ENCODE measurements at regions of chr1 and their contacts with region 1.

Region 1: GRCh38 chr1:200907611-200908097 is 13.0 kb downstream of the INAVA start:
- DNase-seq: no peak
- ATAC-seq: no peak
- H3K4me3 Mint-ChIP-seq: no peak overlapping the region
- H3K27ac Mint-ChIP-seq: no peak overlapping the region
- H3K4me1 Mint-ChIP-seq: peaks cover 11% of the 10 kb centered on the region
- H3K27me3 Mint-ChIP-seq: peaks cover 8% of the 10 kb centered on the region
- CTCF ChIP-seq: no peak

Region 2: DNA sequence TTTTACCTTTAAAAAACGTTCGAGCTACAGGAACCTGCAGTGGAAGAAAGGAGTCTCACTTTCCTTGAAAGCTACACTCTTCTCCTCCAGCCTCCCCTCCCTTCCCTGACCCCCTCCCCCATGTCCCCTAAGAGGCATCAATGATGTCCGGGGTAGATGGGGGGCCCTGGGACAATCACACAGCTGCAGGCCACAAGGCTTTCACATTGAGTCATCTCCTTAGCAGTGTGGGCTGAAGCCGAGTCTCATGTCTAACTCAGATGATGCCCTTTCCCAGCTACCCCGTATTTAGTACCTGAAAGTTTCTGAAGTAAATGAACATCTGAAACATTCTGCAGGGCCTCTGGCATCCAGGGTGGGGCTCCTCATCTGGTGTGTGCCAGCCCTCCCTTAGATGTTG is 41.1 kb before region 1 on chr1:
- CTCF ChIA-PET with region 1: no interaction called
- POLR2A ChIA-PET with region 1: interaction called, 3 read pairs
- intact Hi-C with region 1: loop called (anchors 5 kb)
- DNase-seq: peak; percentile 92
- ATAC-seq: peak; percentile 86
- H3K4me3 Mint-ChIP-seq: no peak overlapping the region
- H3K27ac Mint-ChIP-seq: no peak overlapping the region
- H3K4me1 Mint-ChIP-seq: peaks cover 55% of the 10 kb centered on the region
- H3K27me3 Mint-ChIP-seq: peaks cover 14% of the 10 kb centered on the region
- CTCF ChIP-seq: no peak

Region 3: DNA sequence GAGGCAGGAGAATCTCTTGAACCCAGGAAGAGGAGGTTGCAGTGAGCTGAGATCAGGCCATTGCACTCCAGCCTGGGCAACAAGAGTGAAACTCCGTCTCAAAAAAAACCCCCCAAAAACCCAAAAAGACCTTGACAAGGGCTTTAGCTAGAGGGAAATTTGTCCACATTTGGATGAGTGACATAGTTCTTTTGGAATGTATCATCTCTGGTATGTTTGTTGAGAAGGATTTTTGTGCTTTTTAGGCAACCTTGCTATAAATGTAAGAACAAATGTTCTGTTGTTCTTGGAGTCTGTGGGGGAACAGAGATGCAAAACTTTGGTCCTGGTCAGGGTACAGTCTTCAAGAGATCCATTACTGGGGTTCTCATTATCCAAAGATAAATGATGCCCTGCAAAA is 15.9 kb after region 1 on chr1:
- CTCF ChIA-PET with region 1: no interaction called
- POLR2A ChIA-PET with region 1: no interaction called
- intact Hi-C with region 1: no loop called
- DNase-seq: no peak
- ATAC-seq: no peak
- H3K4me3 Mint-ChIP-seq: no peak overlapping the region
- H3K27ac Mint-ChIP-seq: no peak overlapping the region
- H3K4me1 Mint-ChIP-seq: peaks cover 7% of the 10 kb centered on the region
- H3K27me3 Mint-ChIP-seq: peaks cover 4% of the 10 kb centered on the region
- CTCF ChIP-seq: no peak